HepG2 (cell line): ENCODE measurements at regions of chr12 and their contacts with region 1.

Region 1: GRCh38 chr12:31959161-31959700 is at the start of gene RESF1:
- DNase-seq: peak; percentile 79
- ATAC-seq: peak; percentile 98
- H3K4me3 ChIP-seq: peak within 1 kb of the TSS; percentile 63 to 76 (median 68)
- H3K27ac ChIP-seq: peak within 1 kb of the TSS; percentile 79
- H3K4me1 ChIP-seq: peaks cover 36% of the 10 kb centered on the region
- H3K27me3 ChIP-seq: no peaks in the 10 kb centered on the region
- CTCF ChIP-seq: no peak
- EP300 ChIP-seq: peak in 1 of 2 experiments; percentile 48; a peak in 1 of 4 replicates
- POLR2A ChIP-seq: peak; percentile 60 to 64
- RAD21 ChIP-seq: peak; percentile 38; the same call in 1 of the 2 replicates
- total RNA-seq, gene RESF1: 16.8 and 19.6 TPM in 2 replicates

Region 2: GRCh38 chr12:31659087-31659933 is 299.9 kb before region 1 on chr12 and contains the start of gene ETFBKMT:
- CTCF ChIA-PET with region 1: no interaction called
- POLR2A ChIA-PET with region 1: no interaction called
- in situ Hi-C with region 1: no loop called
- intact Hi-C with region 1: loop called (anchors 5 kb)
- DNase-seq: peak; percentile 90
- ATAC-seq: peak; percentile 98
- H3K4me3 ChIP-seq: peak within 1 kb of the TSS; percentile 76 to 80 (median 78)
- H3K27ac ChIP-seq: peak within 1 kb of the TSS; percentile 87
- H3K4me1 ChIP-seq: peaks cover 21% of the 10 kb centered on the region
- H3K27me3 ChIP-seq: peaks cover 0 to 8% of the 10 kb centered on the region in 2 experiments; a peak in 2 of 5 replicates
- CTCF ChIP-seq: peak; percentile 55
- EP300 ChIP-seq: no peak
- POLR2A ChIP-seq: peak; percentile 43 to 52; a peak in 2 of 4 replicates
- RAD21 ChIP-seq: peak; percentile 57; the same call in 1 of the 2 replicates
- total RNA-seq, gene ETFBKMT: 0.93 and 1.1 TPM in 2 replicates

Region 3: DNA sequence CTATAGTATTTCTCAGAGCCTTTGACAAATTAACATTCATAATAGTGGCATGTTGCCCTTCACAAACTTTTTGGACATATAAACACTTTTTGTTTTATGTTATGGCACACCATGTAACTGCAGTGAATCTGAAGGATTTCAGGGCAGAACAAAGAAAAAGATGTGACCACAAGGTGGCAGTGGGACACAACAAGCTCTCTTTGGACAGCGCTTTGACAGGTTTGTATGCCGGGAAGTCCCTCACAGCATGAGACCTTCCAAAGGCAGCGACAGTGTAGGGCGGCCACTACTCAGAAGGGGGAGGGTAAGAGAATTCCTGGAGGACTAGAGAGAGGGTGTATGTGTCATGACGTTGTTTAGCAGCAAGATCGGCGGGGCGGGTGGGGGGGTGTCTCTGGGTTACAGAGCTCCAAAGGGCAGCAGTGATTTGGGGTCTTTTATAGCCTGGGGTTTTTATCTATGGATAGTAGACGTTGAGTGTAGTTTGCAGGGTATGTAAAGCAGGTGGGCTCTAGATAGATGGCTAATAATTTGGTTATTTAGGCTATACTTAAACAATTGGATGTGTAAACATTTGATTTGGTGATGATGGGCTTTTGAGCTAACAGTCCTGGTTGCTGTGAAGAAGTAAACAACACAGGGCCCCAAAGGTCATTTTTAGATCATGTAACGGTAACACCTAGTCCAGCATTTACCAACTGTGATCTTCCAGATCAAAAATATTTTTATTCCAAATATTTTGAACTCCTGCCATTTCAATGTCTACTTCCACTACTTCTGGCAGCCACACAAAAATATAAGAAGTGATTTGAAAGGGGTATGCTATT is 276.9 kb before region 1 on chr12:
- CTCF ChIA-PET with region 1: no interaction called
- POLR2A ChIA-PET with region 1: no interaction called
- in situ Hi-C with region 1: no loop called
- intact Hi-C with region 1: loop called (anchors 5 kb)
- DNase-seq: peak; percentile 81
- ATAC-seq: peak; percentile 92
- H3K4me3 ChIP-seq: no peak overlapping the region
- H3K27ac ChIP-seq: no peak overlapping the region
- H3K4me1 ChIP-seq: no peaks in the 10 kb centered on the region
- H3K27me3 ChIP-seq: no peaks in the 10 kb centered on the region
- CTCF ChIP-seq: peak; percentile 90
- EP300 ChIP-seq: no peak
- POLR2A ChIP-seq: no peak
- RAD21 ChIP-seq: peak; percentile 95

Region 4: GRCh38 chr12:31773867-31774266 is 185.4 kb before region 1 on chr12:
- CTCF ChIA-PET with region 1: no interaction called
- POLR2A ChIA-PET with region 1: interaction called, 3 read pairs
- in situ Hi-C with region 1: no loop called
- intact Hi-C with region 1: loop called (anchors 5 kb)
- DNase-seq: peak; percentile 20
- ATAC-seq: peak; percentile 70
- H3K4me3 ChIP-seq: peak overlapping the region in 1 of 3 experiments; percentile 22; a peak in 1 of 6 replicates
- H3K27ac ChIP-seq: peak overlapping the region; percentile 84
- H3K4me1 ChIP-seq: peaks cover 35% of the 10 kb centered on the region
- H3K27me3 ChIP-seq: no peaks in the 10 kb centered on the region
- CTCF ChIP-seq: no peak
- EP300 ChIP-seq: no peak
- POLR2A ChIP-seq: no peak
- RAD21 ChIP-seq: no peak